Left lung (tissue), 14 donors: ENCODE measurements at regions of chr1 and their contacts with region 1.

Region 1: GRCh38 chr1:226121587-226122400 is 59.3 kb downstream of the H3-3A start:
- DNase-seq: peak; percentile 66 to 95 (median 74)
- ATAC-seq: peak; percentile 83
- H3K4me3 ChIP-seq: peak overlapping the region; percentile 62 to 65
- H3K27ac ChIP-seq: peak overlapping the region; percentile 81
- H3K4me1 ChIP-seq: peaks cover 3 to 29% of the 10 kb centered on the region in 2 donors
- H3K27me3 ChIP-seq: peaks cover 0 to 16% of the 10 kb centered on the region in 2 donors
- CTCF ChIP-seq: peak; percentile 77 to 90

Region 2: DNA sequence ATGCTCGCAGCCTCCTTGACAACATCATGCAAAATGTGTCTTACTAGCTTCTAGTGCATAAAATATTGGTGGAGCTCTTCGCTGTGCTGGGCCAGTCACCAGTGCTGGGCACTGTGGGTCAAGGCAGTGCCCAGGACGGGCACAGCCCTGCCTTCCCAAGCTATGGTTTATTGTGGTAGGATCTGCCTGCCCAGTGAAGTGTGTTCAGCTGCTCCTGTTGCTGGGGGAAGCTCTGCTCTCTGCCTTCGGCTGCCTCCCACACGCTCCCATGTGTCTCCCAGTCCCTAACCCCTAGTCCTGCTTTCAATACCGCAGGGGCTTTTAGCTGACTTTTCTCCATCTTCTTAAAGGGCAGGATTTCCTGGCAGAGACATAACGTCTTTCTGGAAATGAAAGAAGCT is 296.2 kb before region 1 on chr1:
- intact Hi-C with region 1: no loop called
- DNase-seq: no peak
- ATAC-seq: peak; percentile 14
- H3K4me3 ChIP-seq: no peak overlapping the region
- H3K27ac ChIP-seq: no peak overlapping the region
- H3K4me1 ChIP-seq: peaks cover 24 to 26% of the 10 kb centered on the region in 2 donors
- H3K27me3 ChIP-seq: no peaks in the 10 kb centered on the region
- CTCF ChIP-seq: no peak

Region 3: GRCh38 chr1:226074046-226074445 is 47.7 kb before region 1 on chr1:
- intact Hi-C with region 1: loop called in 1 of 2 experiments (anchors 2 kb)
- DNase-seq: no peak
- ATAC-seq: no peak
- H3K4me3 ChIP-seq: no peak overlapping the region
- H3K27ac ChIP-seq: no peak overlapping the region
- H3K4me1 ChIP-seq: peaks cover 0 to 18% of the 10 kb centered on the region in 2 donors
- H3K27me3 ChIP-seq: no peaks in the 10 kb centered on the region
- CTCF ChIP-seq: no peak

Region 4: DNA sequence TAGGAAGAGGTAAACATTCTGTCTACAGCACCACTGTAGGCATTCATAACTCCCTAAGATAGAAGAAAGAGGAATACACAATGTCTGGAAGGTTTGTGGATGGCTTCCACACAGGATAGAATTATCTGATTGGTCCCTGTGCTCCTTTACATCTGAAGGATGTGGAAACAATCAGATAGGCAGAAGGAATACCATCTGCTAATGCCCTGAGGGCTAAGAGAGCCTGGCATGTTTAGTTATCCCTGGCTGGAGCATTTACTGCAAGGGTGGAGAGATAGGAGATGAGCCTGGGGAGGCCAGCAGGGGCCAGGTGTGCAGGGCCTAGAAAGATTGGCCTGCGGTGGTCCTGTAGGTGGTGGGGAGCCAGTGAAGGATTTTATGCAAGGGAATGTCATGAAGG is 73.3 kb after region 1 on chr1:
- intact Hi-C with region 1: loop called in 1 of 2 experiments (anchors 5 kb)
- DNase-seq: no peak
- ATAC-seq: no peak
- H3K4me3 ChIP-seq: no peak overlapping the region
- H3K27ac ChIP-seq: no peak overlapping the region
- H3K4me1 ChIP-seq: no peaks in the 10 kb centered on the region
- H3K27me3 ChIP-seq: no peaks in the 10 kb centered on the region
- CTCF ChIP-seq: no peak

Region 5: DNA sequence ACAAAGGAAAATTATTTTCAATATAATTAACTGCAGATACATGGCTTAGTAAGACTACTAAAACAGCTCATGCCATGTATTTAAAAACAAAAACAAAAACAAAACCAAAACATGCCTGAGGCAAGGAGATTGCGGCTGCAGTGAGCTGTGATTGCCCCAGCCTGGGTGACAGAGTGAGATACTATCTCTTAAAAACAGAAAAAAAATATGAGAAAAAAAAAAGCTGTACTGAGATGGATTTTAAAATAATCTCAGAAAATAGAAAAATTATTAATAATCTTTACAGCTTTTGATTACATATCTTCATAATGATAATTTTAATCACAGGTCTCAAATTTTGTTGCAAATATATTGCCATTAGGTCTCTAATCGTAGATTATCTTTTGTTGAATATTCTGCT is 211.2 kb after region 1 on chr1:
- intact Hi-C with region 1: loop called in 1 of 2 experiments (anchors 10 kb)
- DNase-seq: no peak
- ATAC-seq: no peak
- H3K4me3 ChIP-seq: no peak overlapping the region
- H3K27ac ChIP-seq: no peak overlapping the region
- H3K4me1 ChIP-seq: peaks cover 0 to 7% of the 10 kb centered on the region in 2 donors
- H3K27me3 ChIP-seq: no peaks in the 10 kb centered on the region
- CTCF ChIP-seq: no peak